ENCODE measurements at regions of chr11 and their contacts with region 1.

Region 1: DNA sequence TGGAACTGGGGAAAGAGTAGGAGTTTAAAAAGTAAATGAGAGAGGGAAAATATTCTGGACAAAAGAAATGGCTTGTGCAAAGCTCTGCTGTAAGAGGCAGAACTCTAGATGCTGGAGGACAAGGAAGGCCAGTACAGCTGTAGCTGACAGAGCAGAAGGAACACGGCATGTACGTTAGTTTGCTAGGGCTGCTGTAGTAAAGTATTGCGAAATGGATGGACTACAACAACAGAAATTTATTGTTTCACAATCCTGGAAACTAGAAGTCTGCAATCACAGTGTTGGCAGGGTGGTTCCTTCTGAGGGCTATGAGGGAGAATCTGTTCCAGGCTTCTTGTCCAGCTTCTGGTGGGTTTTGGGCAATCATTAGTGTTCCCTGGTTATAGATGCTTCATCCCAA is 454.4 kb downstream of the NTM start:
- DNase-seq: peak; percentile 56 to 83 (median 77)
- H3K4me3 ChIP-seq: no peak overlapping the region
- H3K4me3 Mint-ChIP-seq: peak overlapping the region in 1 of 2 donors; percentile 72
- H3K27ac ChIP-seq: peak overlapping the region in 1 of 2 donors; percentile 70
- H3K27ac Mint-ChIP-seq: peak overlapping the region in 3 of 7 donors; percentile 75 to 89 (median 79)
- H3K4me1 ChIP-seq: peaks cover 60 to 65% of the 10 kb centered on the region in 2 donors
- H3K4me1 Mint-ChIP-seq: peaks cover 27% of the 10 kb centered on the region
- H3K27me3 ChIP-seq: no peaks in the 10 kb centered on the region
- H3K27me3 Mint-ChIP-seq: no peaks in the 10 kb centered on the region
- CTCF ChIP-seq: no peak

Region 2: DNA sequence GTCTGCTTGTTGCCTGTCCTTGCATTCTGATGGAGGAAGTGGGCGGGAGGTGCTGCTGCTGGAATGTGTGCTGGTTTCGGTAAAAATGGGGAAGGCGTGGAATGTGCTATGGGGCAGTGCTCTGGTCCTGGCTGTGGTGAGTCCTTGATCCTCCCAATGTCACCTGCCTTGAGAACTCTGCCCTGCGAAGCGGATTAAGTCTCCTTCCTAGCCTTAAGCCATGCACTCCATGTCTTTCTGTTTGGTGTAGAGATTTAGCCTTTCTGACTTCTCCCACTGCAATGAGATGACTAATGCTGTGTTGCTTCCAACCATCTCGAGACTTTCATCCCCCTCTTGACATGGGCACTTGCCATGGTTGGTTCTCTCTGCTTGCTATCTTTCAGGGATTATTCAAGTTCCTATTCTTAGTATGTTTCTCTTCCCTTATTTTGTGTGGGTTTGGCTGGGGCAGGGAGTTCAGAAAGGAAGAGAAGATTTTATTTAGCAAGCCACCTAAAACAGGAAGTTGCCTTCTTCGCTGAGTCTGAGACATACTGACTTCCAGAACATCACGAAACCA is 233.5 kb after region 1 on chr11:
- intact Hi-C with region 1: loop called in 1 of 2 experiments (anchors 5 kb)
- DNase-seq: peak; percentile 72 to 86 (median 84)
- H3K4me3 ChIP-seq: peak overlapping the region in 1 of 3 experiments; percentile 64
- H3K4me3 Mint-ChIP-seq: no peak overlapping the region
- H3K27ac ChIP-seq: peak overlapping the region; percentile 76 to 82
- H3K27ac Mint-ChIP-seq: peak overlapping the region in 2 of 7 donors; percentile 91 to 93
- H3K4me1 ChIP-seq: peaks cover 46 to 48% of the 10 kb centered on the region in 2 donors
- H3K4me1 Mint-ChIP-seq: peaks cover 2% of the 10 kb centered on the region
- H3K27me3 ChIP-seq: no peaks in the 10 kb centered on the region
- H3K27me3 Mint-ChIP-seq: peaks cover 0 to 5% (median 0%) of the 10 kb centered on the region in 3 donors
- CTCF ChIP-seq: no peak

Measured in CD14-positive monocyte (primary cell).